GM12878 (cell line): ENCODE measurements at regions of chr1 and their contacts with region 1.

Region 1: DNA sequence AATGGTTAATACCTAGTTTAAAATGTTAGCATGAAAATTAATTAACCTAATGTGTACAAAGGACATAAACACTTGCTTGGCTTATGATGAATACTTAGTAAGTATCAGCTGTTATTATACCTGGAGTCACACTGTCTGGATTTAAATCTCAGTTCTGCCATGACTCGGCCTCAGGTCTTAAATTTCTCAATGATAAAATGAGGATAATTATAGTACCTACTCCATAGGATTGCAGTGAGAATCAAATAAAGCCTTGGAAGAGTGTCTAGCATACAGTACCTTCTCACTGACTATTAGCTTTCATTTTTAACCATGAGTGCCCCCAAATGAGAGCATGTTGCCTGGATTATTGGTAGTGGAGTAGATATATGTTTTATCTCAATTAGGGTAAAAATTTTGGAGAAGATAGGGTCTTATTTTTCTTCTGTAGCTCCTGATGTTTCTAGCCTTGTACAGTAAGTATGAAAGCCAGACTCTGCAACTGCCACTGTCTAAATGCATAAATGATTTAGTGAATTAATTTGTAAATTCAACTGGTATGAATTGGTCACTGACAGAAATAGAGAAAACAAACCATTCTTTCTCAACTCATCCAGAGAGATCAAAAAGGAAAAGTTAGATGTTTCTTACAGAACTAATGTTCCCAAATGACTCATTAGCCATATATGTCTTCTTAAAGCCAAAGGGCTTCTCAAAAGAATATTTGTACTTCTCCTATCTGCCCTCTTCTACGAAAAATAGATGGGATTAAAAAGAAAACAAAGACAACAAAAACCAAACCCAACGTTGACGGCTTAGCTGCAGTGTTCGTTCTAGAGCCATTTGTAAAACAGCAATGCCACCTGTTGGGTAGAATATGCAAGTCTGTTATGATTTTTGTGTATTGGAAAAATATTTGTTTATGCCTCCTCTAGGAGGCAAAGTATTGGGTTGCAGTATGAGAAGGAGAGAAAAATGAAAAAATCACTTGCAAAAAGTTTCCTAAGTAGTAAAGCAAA is 53.8 kb upstream of the MROH9 start:
- DNase-seq: peak; percentile 23
- ATAC-seq: peak; percentile 76
- H3K4me3 ChIP-seq: no peak overlapping the region
- H3K27ac ChIP-seq: no peak overlapping the region
- H3K4me1 ChIP-seq: no peaks in the 10 kb centered on the region
- H3K27me3 ChIP-seq: no peaks in the 10 kb centered on the region
- CTCF ChIP-seq: peak; percentile 42 to 75 (median 53); a peak in 5 of 6 replicates
- EP300 ChIP-seq: no peak
- POLR2A ChIP-seq: no peak
- RAD21 ChIP-seq: peak; percentile 87

Region 2: GRCh38 chr1:169928438-169929209 is 952.9 kb before region 1 on chr1:
- CTCF ChIA-PET with region 1: interaction called, 5 read pairs
- POLR2A ChIA-PET with region 1: no interaction called
- RAD21 ChIA-PET with region 1: interaction called, 6 read pairs
- SMC1A ChIA-PET with region 1: no interaction called
- in situ Hi-C with region 1: loop called (anchors 10 kb)
- intact Hi-C with region 1: loop called (anchors 5 kb)
- DNase-seq: no peak
- ATAC-seq: peak; percentile 82
- H3K4me3 ChIP-seq: no peak overlapping the region
- H3K27ac ChIP-seq: no peak overlapping the region
- H3K4me1 ChIP-seq: peaks cover 6% of the 10 kb centered on the region
- H3K27me3 ChIP-seq: no peaks in the 10 kb centered on the region
- CTCF ChIP-seq: peak; percentile 53 to 73 (median 70)
- EP300 ChIP-seq: no peak
- POLR2A ChIP-seq: no peak
- RAD21 ChIP-seq: peak; percentile 88

Region 3: DNA sequence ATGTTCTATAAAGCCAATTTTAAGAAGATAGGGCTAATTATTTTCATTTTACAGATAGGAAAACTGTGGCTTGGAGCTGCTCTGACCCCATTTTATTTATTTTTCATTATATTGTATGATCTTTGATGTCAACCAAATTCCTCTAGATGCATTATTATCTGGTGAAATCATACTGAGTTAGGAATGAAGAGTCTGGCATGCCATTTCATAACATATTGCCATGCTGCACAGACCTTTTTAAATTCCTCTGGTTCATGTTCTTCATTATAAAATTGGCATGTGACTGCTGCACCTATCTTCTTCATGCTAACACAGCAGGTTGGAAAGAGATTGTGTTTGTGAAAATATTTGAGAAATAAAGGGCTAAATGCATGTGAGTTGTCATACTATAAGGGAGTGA is 204.9 kb before region 1 on chr1:
- CTCF ChIA-PET with region 1: interaction called, 15 read pairs
- POLR2A ChIA-PET with region 1: interaction called, 4 read pairs
- RAD21 ChIA-PET with region 1: interaction called, 10 read pairs
- SMC1A ChIA-PET with region 1: interaction called, 6 read pairs
- in situ Hi-C with region 1: no loop called
- intact Hi-C with region 1: no loop called
- DNase-seq: no peak
- ATAC-seq: no peak
- H3K4me3 ChIP-seq: no peak overlapping the region
- H3K27ac ChIP-seq: no peak overlapping the region
- H3K4me1 ChIP-seq: no peaks in the 10 kb centered on the region
- H3K27me3 ChIP-seq: no peaks in the 10 kb centered on the region; a peak in 2 of 4 replicates
- CTCF ChIP-seq: no peak
- EP300 ChIP-seq: no peak
- POLR2A ChIP-seq: no peak
- RAD21 ChIP-seq: no peak

Region 4: GRCh38 chr1:170692866-170693575 is 188.5 kb before region 1 on chr1:
- CTCF ChIA-PET with region 1: interaction called, 99 read pairs
- POLR2A ChIA-PET with region 1: no interaction called
- RAD21 ChIA-PET with region 1: interaction called, 16 read pairs
- SMC1A ChIA-PET with region 1: interaction called, 37 read pairs
- in situ Hi-C with region 1: loop called (anchors 5 kb)
- intact Hi-C with region 1: loop called (anchors 1 kb)
- DNase-seq: no peak
- ATAC-seq: no peak
- H3K4me3 ChIP-seq: no peak overlapping the region
- H3K27ac ChIP-seq: no peak overlapping the region
- H3K4me1 ChIP-seq: no peaks in the 10 kb centered on the region
- H3K27me3 ChIP-seq: no peaks in the 10 kb centered on the region
- CTCF ChIP-seq: no peak
- EP300 ChIP-seq: no peak
- POLR2A ChIP-seq: no peak
- RAD21 ChIP-seq: no peak

Region 5: GRCh38 chr1:170891872-170892271 is 10.3 kb after region 1 on chr1:
- CTCF ChIA-PET with region 1: interaction called, 9 read pairs
- POLR2A ChIA-PET with region 1: interaction called, 3 read pairs
- RAD21 ChIA-PET with region 1: no interaction called
- SMC1A ChIA-PET with region 1: interaction called, 22 read pairs
- in situ Hi-C with region 1: no loop called
- intact Hi-C with region 1: no loop called
- DNase-seq: no peak
- ATAC-seq: no peak
- H3K4me3 ChIP-seq: no peak overlapping the region
- H3K27ac ChIP-seq: no peak overlapping the region
- H3K4me1 ChIP-seq: no peaks in the 10 kb centered on the region
- H3K27me3 ChIP-seq: no peaks in the 10 kb centered on the region; a peak in 1 of 4 replicates
- CTCF ChIP-seq: no peak
- EP300 ChIP-seq: no peak
- POLR2A ChIP-seq: no peak
- RAD21 ChIP-seq: no peak